CD4-positive, alpha-beta T cell (primary cell): ENCODE measurements at regions of chr17 and their contacts with region 1.

Region 1: DNA sequence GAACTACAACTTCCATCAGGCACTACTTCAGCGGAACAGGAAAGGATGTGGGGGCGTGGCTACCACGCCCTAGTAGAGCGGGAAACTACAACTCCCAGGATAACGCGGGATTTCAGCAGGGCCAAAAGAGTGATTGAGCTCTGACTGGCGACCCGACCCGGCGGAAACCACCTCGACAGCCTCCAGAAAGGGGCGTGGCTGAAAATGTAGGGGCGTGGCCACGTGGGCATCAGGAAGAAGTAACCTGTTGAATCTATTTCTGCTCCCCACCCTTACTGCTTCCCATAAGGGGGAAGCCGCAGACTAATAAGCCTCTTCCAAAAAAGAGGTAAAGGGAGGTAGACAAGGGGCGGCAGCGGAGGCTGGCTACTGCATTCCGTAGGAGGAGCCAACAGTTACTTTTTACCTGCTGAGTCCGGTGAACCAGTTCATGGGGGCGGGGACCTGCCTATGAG is at the start of gene TMEM102:
- DNase-seq: peak; percentile 96 to 100 (median 98)
- ATAC-seq: peak; percentile 82
- H3K4me3 ChIP-seq: peak within 1 kb of the TSS; percentile 86
- H3K4me3 Mint-ChIP-seq: peak within 1 kb of the TSS; percentile 87
- H3K27ac ChIP-seq: peak within 1 kb of the TSS; percentile 83 to 93
- H3K27ac Mint-ChIP-seq: peak within 1 kb of the TSS; percentile 87
- H3K4me1 ChIP-seq: peaks cover 51% of the 10 kb centered on the region
- H3K4me1 Mint-ChIP-seq: peaks cover 41% of the 10 kb centered on the region
- H3K27me3 ChIP-seq: peaks cover 16 to 21% of the 10 kb centered on the region in 2 experiments
- H3K27me3 Mint-ChIP-seq: peaks cover 16% of the 10 kb centered on the region
- CTCF ChIP-seq: no peak
- total RNA-seq, gene TMEM102: 6.8 to 7.1 TPM

Region 2: DNA sequence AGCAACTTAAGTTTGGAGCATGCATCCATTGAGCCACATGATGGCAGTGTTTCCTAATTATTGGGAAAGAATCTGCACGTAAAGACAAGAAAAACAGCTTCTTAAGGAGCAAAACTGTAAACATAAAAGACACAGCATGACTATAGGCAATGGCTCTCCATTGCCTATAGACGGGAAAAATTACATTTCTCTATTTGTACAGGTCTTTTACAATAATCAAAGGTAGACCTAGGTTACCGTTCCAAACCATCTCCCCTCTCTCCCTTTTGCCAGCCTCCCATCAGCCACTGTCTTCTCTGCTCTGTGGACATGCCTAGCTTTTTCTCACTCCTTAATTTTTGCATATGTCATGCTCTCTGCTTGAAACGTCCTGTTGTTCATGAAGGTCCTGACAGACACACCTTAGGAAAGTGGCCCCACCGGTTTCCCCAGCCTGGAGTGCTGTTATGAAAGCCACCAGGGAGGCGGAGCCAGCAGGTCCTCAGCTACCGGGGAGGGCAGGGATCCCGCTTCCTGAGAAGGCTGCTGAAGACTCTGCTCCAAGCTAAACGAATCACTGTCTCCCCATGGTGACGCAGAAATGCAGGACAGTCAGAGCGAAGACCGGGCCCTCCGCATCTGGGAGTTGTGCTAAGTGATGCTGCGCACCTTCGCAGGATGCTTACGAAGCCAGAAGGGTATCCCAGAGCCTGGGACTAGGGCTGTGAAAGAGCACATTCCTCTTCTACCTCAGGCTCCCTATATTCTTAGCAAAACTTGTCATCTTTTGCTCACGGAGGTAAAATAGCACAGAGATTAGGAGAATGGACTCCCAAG is 389.1 kb before region 1 on chr17:
- CTCF ChIA-PET with region 1: interaction called, 3 read pairs
- POLR2A ChIA-PET with region 1: interaction called, 4 read pairs
- intact Hi-C with region 1: loop called in 1 of 2 experiments (anchors 5 kb)
- DNase-seq: peak in 9 of 14 experiments; percentile 31 to 89 (median 49)
- ATAC-seq: peak; percentile 53
- H3K4me3 ChIP-seq: peak overlapping the region; percentile 55
- H3K4me3 Mint-ChIP-seq: peak overlapping the region; percentile 90
- H3K27ac ChIP-seq: peak overlapping the region; percentile 64 to 68
- H3K27ac Mint-ChIP-seq: peak overlapping the region; percentile 94
- H3K4me1 ChIP-seq: peaks cover 49% of the 10 kb centered on the region
- H3K4me1 Mint-ChIP-seq: peaks cover 44% of the 10 kb centered on the region
- H3K27me3 ChIP-seq: peaks cover 0 to 5% of the 10 kb centered on the region in 2 experiments
- H3K27me3 Mint-ChIP-seq: no peaks in the 10 kb centered on the region
- CTCF ChIP-seq: peak; percentile 80

Region 3: DNA sequence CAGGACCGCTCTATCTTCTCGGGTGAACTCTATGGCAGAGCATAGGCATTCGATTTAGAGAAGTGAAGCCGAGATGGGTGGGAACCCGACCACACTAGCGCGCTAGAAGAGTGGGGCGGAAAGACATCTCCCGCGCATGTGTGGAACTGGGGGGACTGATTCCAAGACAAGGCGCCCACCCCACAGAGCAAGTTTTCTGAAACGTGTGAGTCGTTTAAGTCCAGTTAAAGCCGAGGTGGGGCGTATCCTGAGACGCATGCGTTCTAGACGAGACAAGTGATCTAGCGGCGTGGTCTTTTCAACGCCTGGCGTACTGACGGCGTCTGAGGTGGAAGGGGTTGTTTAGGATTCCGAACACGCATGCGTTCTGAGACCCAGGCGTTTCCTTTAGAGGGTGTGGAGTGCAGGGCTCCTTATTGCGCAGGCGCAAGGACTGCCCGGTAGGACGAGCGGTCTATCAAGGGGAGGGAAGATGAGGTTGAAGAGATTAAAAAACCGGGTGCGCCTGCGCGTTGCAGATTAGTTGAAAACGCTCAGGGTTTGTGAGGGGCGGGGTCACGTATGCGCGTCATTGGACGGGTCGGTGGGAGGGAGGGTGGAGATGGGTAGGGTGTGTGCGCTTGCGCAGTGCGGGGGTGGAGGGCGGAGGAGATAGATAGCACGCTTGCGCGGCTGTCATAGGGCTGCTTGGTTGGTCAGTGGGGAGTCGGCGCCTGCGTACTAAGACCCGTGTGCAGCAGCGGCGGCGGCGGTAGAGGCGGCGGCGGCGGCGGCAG is 128.1 kb before region 1 on chr17 and contains the start of gene EIF5A:
- CTCF ChIA-PET with region 1: no interaction called
- POLR2A ChIA-PET with region 1: interaction called, 4 read pairs
- intact Hi-C with region 1: loop called in 1 of 2 experiments (anchors 5 kb)
- DNase-seq: peak; percentile 100
- ATAC-seq: peak; percentile 68
- H3K4me3 ChIP-seq: peak within 1 kb of the TSS; percentile 76
- H3K4me3 Mint-ChIP-seq: peak within 1 kb of the TSS; percentile 92
- H3K27ac ChIP-seq: peak within 1 kb of the TSS; percentile 97 to 99
- H3K27ac Mint-ChIP-seq: peak within 1 kb of the TSS; percentile 98
- H3K4me1 ChIP-seq: peaks cover 39% of the 10 kb centered on the region
- H3K4me1 Mint-ChIP-seq: peaks cover 44% of the 10 kb centered on the region
- H3K27me3 ChIP-seq: no peaks in the 10 kb centered on the region
- H3K27me3 Mint-ChIP-seq: no peaks in the 10 kb centered on the region
- CTCF ChIP-seq: no peak
- total RNA-seq, gene EIF5A: 471 to 480 TPM

Region 4: GRCh38 chr17:7383742-7384488 is 51.3 kb before region 1 on chr17:
- CTCF ChIA-PET with region 1: interaction called, 8 read pairs
- POLR2A ChIA-PET with region 1: interaction called, 26 read pairs
- intact Hi-C with region 1: loop called in 1 of 2 experiments (anchors 10 kb)
- DNase-seq: peak; percentile 63 to 93 (median 77)
- ATAC-seq: peak; percentile 94
- H3K4me3 ChIP-seq: peak overlapping the region; percentile 64
- H3K4me3 Mint-ChIP-seq: peak overlapping the region; percentile 87
- H3K27ac ChIP-seq: peak overlapping the region; percentile 74 to 77
- H3K27ac Mint-ChIP-seq: peak overlapping the region; percentile 91
- H3K4me1 ChIP-seq: peaks cover 28% of the 10 kb centered on the region
- H3K4me1 Mint-ChIP-seq: peaks cover 10% of the 10 kb centered on the region
- H3K27me3 ChIP-seq: peaks cover 21 to 22% of the 10 kb centered on the region in 2 experiments
- H3K27me3 Mint-ChIP-seq: peaks cover 41% of the 10 kb centered on the region
- CTCF ChIP-seq: no peak

Region 5: DNA sequence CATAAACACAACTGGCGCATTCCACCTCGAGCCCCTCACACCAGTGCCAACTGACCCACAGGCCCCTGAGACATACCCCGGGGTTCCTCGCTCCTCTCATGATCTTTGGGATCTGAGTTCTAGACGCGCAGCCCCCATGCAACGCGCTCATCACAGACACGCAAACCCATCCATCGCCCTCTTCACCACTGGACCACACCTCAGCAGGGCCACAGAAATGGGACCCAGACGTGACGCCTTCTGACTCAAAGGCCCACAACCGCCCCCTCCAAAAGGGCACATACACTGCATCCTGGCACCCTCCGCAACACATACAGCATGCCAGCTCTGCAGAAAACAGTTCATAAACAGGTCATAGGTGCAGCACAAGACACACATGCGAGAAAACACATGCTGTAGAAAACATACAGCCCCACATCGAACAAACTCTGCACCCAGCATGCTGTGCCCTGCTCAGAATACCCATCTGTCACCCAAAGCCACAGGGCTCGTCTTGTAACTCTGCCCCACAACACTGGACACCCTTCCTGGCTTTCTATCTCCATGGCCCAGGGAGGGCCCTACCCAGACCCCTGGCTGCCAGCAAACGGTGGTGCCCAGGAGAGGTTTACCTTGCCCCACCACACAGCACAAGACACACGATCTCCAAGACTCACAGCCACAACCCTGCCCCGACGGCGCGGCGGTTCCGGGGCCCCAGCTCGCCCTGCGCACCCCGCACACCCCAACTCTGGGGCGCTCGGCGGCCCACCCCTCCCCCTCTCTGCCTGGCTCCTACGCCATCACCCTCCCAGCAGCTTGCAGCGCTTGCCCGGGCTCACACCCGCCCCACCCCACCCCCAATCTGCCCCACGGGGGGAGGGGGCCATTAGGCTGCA is 43.3 kb after region 1 on chr17:
- CTCF ChIA-PET with region 1: interaction called, 61 read pairs
- POLR2A ChIA-PET with region 1: interaction called, 156 read pairs
- intact Hi-C with region 1: loop called in 1 of 2 experiments (anchors 2 kb)
- DNase-seq: peak; percentile 46 to 88 (median 70)
- ATAC-seq: peak; percentile 46
- H3K4me3 ChIP-seq: peak overlapping the region; percentile 77
- H3K4me3 Mint-ChIP-seq: peak overlapping the region; percentile 91
- H3K27ac ChIP-seq: peak overlapping the region; percentile 70 to 99
- H3K27ac Mint-ChIP-seq: peak overlapping the region; percentile 93
- H3K4me1 ChIP-seq: peaks cover 81% of the 10 kb centered on the region
- H3K4me1 Mint-ChIP-seq: peaks cover 60% of the 10 kb centered on the region
- H3K27me3 ChIP-seq: no peaks in the 10 kb centered on the region
- H3K27me3 Mint-ChIP-seq: no peaks in the 10 kb centered on the region
- CTCF ChIP-seq: no peak

Region 6: DNA sequence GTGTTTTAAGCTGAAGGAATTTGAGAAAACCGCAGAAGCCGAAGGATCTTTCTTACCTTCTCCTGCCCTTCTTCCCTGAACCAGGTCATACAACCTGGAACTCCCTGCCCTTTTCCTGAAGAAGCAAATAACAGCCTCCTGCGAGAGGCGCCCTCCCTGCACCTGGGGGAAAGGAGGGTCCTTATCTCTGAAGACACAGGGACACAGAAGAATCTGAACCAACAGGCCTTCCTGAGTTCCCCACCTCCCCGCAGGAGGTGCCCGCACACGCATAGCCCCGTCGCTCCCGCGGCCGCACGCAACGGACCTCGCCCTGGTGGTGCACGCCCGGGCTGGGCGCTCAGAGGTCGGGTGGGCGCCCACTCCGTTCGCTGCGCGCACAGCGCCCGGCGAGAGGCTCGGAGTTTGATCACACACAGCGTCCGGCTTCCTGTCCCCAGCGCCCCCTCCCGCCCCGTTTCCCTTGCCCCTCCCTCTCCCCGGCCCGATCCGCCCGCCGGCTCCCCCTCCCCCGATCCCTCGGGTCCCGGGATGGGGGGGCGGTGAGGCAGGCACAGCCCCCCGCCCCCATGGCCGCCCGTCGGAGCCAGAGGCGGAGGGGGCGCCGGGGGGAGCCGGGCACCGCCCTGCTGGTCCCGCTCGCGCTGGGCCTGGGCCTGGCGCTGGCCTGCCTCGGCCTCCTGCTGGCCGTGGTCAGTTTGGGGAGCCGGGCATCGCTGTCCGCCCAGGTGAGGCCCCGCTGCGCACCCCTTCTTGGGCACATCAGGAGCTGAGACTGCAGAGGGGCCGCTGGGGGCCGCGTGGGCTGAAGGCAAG is 113.5 kb after region 1 on chr17 and contains the start of gene TNFSF12:
- CTCF ChIA-PET with region 1: interaction called, 11 read pairs
- POLR2A ChIA-PET with region 1: interaction called, 7 read pairs
- intact Hi-C with region 1: no loop called
- DNase-seq: peak; percentile 22 to 77 (median 56)
- ATAC-seq: peak; percentile 19
- H3K4me3 ChIP-seq: peak within 1 kb of the TSS; percentile 87
- H3K4me3 Mint-ChIP-seq: peak within 1 kb of the TSS; percentile 91
- H3K27ac ChIP-seq: peak within 1 kb of the TSS; percentile 36 to 60
- H3K27ac Mint-ChIP-seq: peak within 1 kb of the TSS; percentile 88
- H3K4me1 ChIP-seq: peaks cover 62% of the 10 kb centered on the region
- H3K4me1 Mint-ChIP-seq: peaks cover 50% of the 10 kb centered on the region
- H3K27me3 ChIP-seq: no peaks in the 10 kb centered on the region
- H3K27me3 Mint-ChIP-seq: no peaks in the 10 kb centered on the region
- CTCF ChIP-seq: no peak
- total RNA-seq, gene TNFSF12: 17.0 to 19.1 TPM

Region 7: GRCh38 chr17:7750321-7750821 is 315.1 kb after region 1 on chr17:
- CTCF ChIA-PET with region 1: no interaction called
- POLR2A ChIA-PET with region 1: no interaction called
- intact Hi-C with region 1: no loop called
- DNase-seq: no peak
- ATAC-seq: no peak
- H3K4me3 ChIP-seq: no peak overlapping the region
- H3K4me3 Mint-ChIP-seq: no peak overlapping the region
- H3K27ac ChIP-seq: no peak overlapping the region
- H3K27ac Mint-ChIP-seq: no peak overlapping the region
- H3K4me1 ChIP-seq: no peaks in the 10 kb centered on the region
- H3K4me1 Mint-ChIP-seq: no peaks in the 10 kb centered on the region
- H3K27me3 ChIP-seq: peaks cover 2 to 4% of the 10 kb centered on the region in 2 experiments
- H3K27me3 Mint-ChIP-seq: peaks cover 13% of the 10 kb centered on the region
- CTCF ChIP-seq: no peak

Region 8: DNA sequence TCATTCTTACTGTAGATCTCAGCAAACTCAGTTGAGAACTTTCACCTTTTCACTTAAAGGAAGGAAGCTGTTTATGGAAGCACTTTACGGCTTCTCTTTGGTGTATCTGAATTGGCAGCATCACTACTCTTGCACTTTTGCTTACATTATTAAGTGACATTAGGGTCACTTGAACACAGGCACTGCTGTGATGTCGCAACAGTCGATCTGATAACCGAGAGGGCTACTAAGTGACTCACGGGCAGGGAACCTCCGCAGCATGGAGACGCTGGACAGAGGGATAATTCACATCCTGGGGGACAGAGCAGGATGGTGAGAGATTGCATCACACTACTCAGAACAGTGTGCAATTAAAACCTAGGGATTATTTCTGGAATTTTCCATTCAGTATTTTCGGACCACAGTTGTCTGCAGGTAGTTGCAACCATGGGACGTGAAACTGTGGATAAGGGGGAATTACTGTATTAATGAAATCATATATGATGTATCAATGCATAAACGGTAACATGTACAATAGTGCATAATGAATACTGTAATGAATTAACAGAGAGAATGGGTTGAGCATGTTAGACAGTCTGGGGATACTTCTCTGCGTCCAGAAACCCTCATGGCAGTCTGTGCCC is 338.9 kb after region 1 on chr17:
- CTCF ChIA-PET with region 1: no interaction called
- POLR2A ChIA-PET with region 1: no interaction called
- intact Hi-C with region 1: no loop called
- DNase-seq: no peak
- ATAC-seq: no peak
- H3K4me3 ChIP-seq: no peak overlapping the region
- H3K4me3 Mint-ChIP-seq: no peak overlapping the region
- H3K27ac ChIP-seq: no peak overlapping the region
- H3K27ac Mint-ChIP-seq: no peak overlapping the region
- H3K4me1 ChIP-seq: no peaks in the 10 kb centered on the region
- H3K4me1 Mint-ChIP-seq: no peaks in the 10 kb centered on the region
- H3K27me3 ChIP-seq: peaks cover 2 to 7% of the 10 kb centered on the region in 2 experiments
- H3K27me3 Mint-ChIP-seq: peaks cover 53% of the 10 kb centered on the region
- CTCF ChIP-seq: no peak